CD4-positive, alpha-beta T cell (primary cell): ENCODE measurements at regions of chr2 and their contacts with region 1.

Region 1: GRCh38 chr2:25376750-25377621 is 35.3 kb upstream of the DNMT3A start:
- DNase-seq: peak; percentile 81 to 97 (median 90)
- ATAC-seq: peak; percentile 99
- H3K4me3 ChIP-seq: no peak overlapping the region
- H3K4me3 Mint-ChIP-seq: peak overlapping the region; percentile 73
- H3K27ac ChIP-seq: peak overlapping the region; percentile 48 to 80
- H3K27ac Mint-ChIP-seq: peak overlapping the region; percentile 98
- H3K4me1 ChIP-seq: peaks cover 40% of the 10 kb centered on the region
- H3K4me1 Mint-ChIP-seq: peaks cover 43% of the 10 kb centered on the region
- H3K27me3 ChIP-seq: no peaks in the 10 kb centered on the region
- H3K27me3 Mint-ChIP-seq: no peaks in the 10 kb centered on the region
- CTCF ChIP-seq: peak; percentile 97

Region 2: DNA sequence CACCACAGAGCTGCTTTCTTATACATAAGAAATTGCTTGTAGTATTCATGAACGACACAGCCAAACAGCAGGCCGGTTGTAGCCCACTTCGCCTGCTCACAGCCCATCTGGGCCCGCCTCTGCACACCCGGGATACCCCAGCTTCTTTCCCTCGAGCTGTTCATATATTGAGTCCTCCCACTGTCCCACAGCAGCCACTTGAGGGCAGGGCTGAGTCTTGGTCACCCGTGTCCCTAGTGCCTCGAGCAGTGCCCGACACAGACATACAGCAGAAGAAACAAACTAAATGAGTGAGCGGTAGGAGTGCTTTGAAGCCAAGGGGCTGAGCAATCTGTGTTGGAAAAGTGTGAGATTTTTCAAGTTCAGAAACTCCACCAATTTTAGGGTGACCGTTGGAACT is 1740.6 kb before region 1 on chr2:
- CTCF ChIA-PET with region 1: no interaction called
- POLR2A ChIA-PET with region 1: no interaction called
- intact Hi-C with region 1: no loop called
- DNase-seq: no peak
- ATAC-seq: no peak
- H3K4me3 ChIP-seq: no peak overlapping the region
- H3K4me3 Mint-ChIP-seq: no peak overlapping the region
- H3K27ac ChIP-seq: no peak overlapping the region
- H3K27ac Mint-ChIP-seq: no peak overlapping the region
- H3K4me1 ChIP-seq: no peaks in the 10 kb centered on the region
- H3K4me1 Mint-ChIP-seq: no peaks in the 10 kb centered on the region
- H3K27me3 ChIP-seq: no peaks in the 10 kb centered on the region
- H3K27me3 Mint-ChIP-seq: no peaks in the 10 kb centered on the region
- CTCF ChIP-seq: no peak

Region 3: DNA sequence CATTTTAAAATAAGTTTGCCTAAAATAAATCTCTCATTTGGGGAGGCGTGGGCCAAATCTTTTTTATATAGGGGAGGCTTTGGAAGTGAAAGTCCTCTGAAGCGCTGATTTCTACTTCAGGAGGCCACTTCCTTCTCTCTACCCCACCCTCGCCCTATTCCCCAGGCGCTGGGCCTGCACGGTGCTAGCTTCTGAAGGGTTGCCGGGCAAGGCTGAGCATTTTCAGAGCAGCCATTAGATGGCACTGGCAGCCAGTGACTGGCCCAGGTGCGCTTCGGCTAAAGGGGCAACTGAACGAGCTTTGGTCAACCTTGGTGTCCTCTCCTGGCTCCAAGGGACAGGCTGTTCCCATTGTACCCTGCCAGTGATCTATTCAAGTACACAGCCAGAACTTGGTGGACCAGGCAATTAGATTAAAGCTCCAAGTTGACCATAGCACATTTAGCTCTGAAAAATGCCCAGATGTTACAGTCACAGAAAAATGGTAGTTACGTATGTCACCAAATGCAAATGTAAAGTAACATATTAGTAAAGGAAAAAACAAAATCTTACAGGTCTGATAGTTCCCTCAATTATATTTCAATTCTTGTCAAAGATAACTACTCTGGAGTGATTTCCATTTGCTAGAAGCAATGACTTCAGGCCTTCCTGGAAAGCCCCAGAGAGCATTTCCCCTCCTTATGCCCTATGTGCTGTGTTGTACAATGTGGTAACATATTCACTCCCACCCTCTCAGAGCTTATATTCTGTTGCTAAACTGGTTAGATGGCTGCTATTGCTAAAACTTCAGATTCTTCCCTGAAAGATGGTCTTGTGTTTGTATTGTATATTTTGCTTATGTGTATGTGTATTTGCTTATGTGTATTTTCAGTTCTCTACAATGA is 210.8 kb before region 1 on chr2:
- CTCF ChIA-PET with region 1: no interaction called
- POLR2A ChIA-PET with region 1: no interaction called
- intact Hi-C with region 1: loop called in 1 of 2 experiments (anchors 10 kb)
- DNase-seq: peak; percentile 2 to 70 (median 39)
- ATAC-seq: peak; percentile 58
- H3K4me3 ChIP-seq: no peak overlapping the region
- H3K4me3 Mint-ChIP-seq: peak overlapping the region; percentile 60
- H3K27ac ChIP-seq: no peak overlapping the region
- H3K27ac Mint-ChIP-seq: peak overlapping the region; percentile 37
- H3K4me1 ChIP-seq: peaks cover 32% of the 10 kb centered on the region
- H3K4me1 Mint-ChIP-seq: peaks cover 36% of the 10 kb centered on the region
- H3K27me3 ChIP-seq: peaks cover 31 to 37% of the 10 kb centered on the region in 2 experiments
- H3K27me3 Mint-ChIP-seq: peaks cover 49% of the 10 kb centered on the region
- CTCF ChIP-seq: peak; percentile 59

Region 4: GRCh38 chr2:25309402-25309801 is 67.6 kb before region 1 on chr2:
- CTCF ChIA-PET with region 1: interaction called, 11 read pairs
- POLR2A ChIA-PET with region 1: interaction called, 3 read pairs
- intact Hi-C with region 1: loop called in 1 of 2 experiments (anchors 5 kb)
- DNase-seq: peak; percentile 49 to 81 (median 60)
- ATAC-seq: peak; percentile 59
- H3K4me3 ChIP-seq: no peak overlapping the region
- H3K4me3 Mint-ChIP-seq: peak overlapping the region; percentile 25
- H3K27ac ChIP-seq: no peak overlapping the region
- H3K27ac Mint-ChIP-seq: peak overlapping the region; percentile 88
- H3K4me1 ChIP-seq: peaks cover 96% of the 10 kb centered on the region
- H3K4me1 Mint-ChIP-seq: peaks cover 87% of the 10 kb centered on the region
- H3K27me3 ChIP-seq: no peaks in the 10 kb centered on the region
- H3K27me3 Mint-ChIP-seq: no peaks in the 10 kb centered on the region
- CTCF ChIP-seq: peak; percentile 66

Region 5: DNA sequence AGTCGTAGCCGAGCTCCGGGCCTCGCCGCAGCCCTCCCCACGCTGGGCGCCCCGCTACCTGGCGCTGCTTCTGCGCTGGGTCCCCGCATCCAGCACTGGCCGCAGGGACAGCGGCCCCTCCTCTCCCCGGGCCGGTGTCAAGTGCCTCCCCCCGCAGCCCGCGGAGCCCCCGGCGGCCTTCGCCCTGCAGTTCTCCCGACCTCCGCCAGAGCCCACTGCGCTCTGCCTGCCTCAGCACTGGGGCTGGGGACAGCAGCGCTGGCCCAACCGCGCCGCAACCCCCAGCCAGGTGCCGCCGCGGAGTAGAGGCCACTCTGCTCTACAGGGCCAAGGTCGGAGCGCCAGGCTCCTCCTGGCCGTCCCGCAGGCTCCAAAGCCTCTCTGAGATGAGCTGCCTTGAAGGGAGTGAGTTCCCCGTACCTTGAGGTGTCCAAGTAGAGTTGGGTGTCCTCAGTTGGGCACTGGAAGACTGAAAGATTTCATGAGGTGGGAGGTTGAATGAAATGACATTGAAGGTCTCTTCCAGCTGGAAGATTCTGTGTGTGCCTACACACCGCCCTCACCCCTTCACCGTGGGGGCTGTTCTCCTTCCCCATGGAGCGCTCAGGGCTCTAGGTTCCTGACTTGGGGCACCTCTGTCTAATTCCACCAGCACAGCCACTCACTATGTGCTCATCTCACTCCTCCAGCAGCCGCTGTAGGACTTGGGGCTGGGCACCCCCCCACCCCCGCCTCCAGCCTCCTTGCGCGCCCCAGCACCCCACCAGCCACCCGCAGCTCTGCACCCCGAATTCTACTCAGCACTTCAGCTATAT is 34.4 kb before region 1 on chr2:
- CTCF ChIA-PET with region 1: interaction called, 7 read pairs
- POLR2A ChIA-PET with region 1: interaction called, 4 read pairs
- intact Hi-C with region 1: loop called (anchors 5 kb)
- DNase-seq: peak; percentile 50 to 92 (median 70)
- ATAC-seq: peak; percentile 85
- H3K4me3 ChIP-seq: peak overlapping the region; percentile 34
- H3K4me3 Mint-ChIP-seq: peak overlapping the region; percentile 91
- H3K27ac ChIP-seq: no peak overlapping the region
- H3K27ac Mint-ChIP-seq: peak overlapping the region; percentile 24
- H3K4me1 ChIP-seq: peaks cover 37% of the 10 kb centered on the region
- H3K4me1 Mint-ChIP-seq: peaks cover 29% of the 10 kb centered on the region
- H3K27me3 ChIP-seq: peaks cover 0 to 2% of the 10 kb centered on the region in 2 experiments
- H3K27me3 Mint-ChIP-seq: no peaks in the 10 kb centered on the region
- CTCF ChIP-seq: peak; percentile 90

Region 6: GRCh38 chr2:25386971-25387875 is 10.2 kb after region 1 on chr2:
- CTCF ChIA-PET with region 1: interaction called, 10 read pairs
- POLR2A ChIA-PET with region 1: no interaction called
- intact Hi-C with region 1: no loop called
- DNase-seq: no peak
- ATAC-seq: no peak
- H3K4me3 ChIP-seq: no peak overlapping the region
- H3K4me3 Mint-ChIP-seq: no peak overlapping the region
- H3K27ac ChIP-seq: no peak overlapping the region
- H3K27ac Mint-ChIP-seq: no peak overlapping the region
- H3K4me1 ChIP-seq: peaks cover 3% of the 10 kb centered on the region
- H3K4me1 Mint-ChIP-seq: peaks cover 13% of the 10 kb centered on the region
- H3K27me3 ChIP-seq: no peaks in the 10 kb centered on the region
- H3K27me3 Mint-ChIP-seq: no peaks in the 10 kb centered on the region
- CTCF ChIP-seq: no peak

Region 7: GRCh38 chr2:25673300-25674076 is 296.5 kb after region 1 on chr2 and contains the start of gene DTNB:
- CTCF ChIA-PET with region 1: no interaction called
- POLR2A ChIA-PET with region 1: no interaction called
- intact Hi-C with region 1: no loop called
- DNase-seq: peak; percentile 58 to 92 (median 76)
- ATAC-seq: peak; percentile 75
- H3K4me3 ChIP-seq: peak within 1 kb of the TSS; percentile 84
- H3K4me3 Mint-ChIP-seq: peak within 1 kb of the TSS; percentile 91
- H3K27ac ChIP-seq: peak within 1 kb of the TSS; percentile 43 to 66
- H3K27ac Mint-ChIP-seq: peak within 1 kb of the TSS; percentile 85
- H3K4me1 ChIP-seq: peaks cover 23% of the 10 kb centered on the region
- H3K4me1 Mint-ChIP-seq: peaks cover 35% of the 10 kb centered on the region
- H3K27me3 ChIP-seq: peaks cover 0 to 2% of the 10 kb centered on the region in 2 experiments
- H3K27me3 Mint-ChIP-seq: no peaks in the 10 kb centered on the region
- CTCF ChIP-seq: no peak
- total RNA-seq, gene DTNB: 30.1 to 33.6 TPM

Region 8: GRCh38 chr2:26330113-26330549 is 953.1 kb after region 1 on chr2:
- CTCF ChIA-PET with region 1: no interaction called
- POLR2A ChIA-PET with region 1: no interaction called
- intact Hi-C with region 1: no loop called
- DNase-seq: peak; percentile 70 to 86 (median 80)
- ATAC-seq: peak; percentile 99
- H3K4me3 ChIP-seq: no peak overlapping the region
- H3K4me3 Mint-ChIP-seq: no peak overlapping the region
- H3K27ac ChIP-seq: no peak overlapping the region
- H3K27ac Mint-ChIP-seq: no peak overlapping the region
- H3K4me1 ChIP-seq: peaks cover 6% of the 10 kb centered on the region
- H3K4me1 Mint-ChIP-seq: peaks cover 11% of the 10 kb centered on the region
- H3K27me3 ChIP-seq: no peaks in the 10 kb centered on the region
- H3K27me3 Mint-ChIP-seq: no peaks in the 10 kb centered on the region
- CTCF ChIP-seq: peak; percentile 95